ENCODE measurements at regions of chr3 and their contacts with region 1.

Region 1: DNA sequence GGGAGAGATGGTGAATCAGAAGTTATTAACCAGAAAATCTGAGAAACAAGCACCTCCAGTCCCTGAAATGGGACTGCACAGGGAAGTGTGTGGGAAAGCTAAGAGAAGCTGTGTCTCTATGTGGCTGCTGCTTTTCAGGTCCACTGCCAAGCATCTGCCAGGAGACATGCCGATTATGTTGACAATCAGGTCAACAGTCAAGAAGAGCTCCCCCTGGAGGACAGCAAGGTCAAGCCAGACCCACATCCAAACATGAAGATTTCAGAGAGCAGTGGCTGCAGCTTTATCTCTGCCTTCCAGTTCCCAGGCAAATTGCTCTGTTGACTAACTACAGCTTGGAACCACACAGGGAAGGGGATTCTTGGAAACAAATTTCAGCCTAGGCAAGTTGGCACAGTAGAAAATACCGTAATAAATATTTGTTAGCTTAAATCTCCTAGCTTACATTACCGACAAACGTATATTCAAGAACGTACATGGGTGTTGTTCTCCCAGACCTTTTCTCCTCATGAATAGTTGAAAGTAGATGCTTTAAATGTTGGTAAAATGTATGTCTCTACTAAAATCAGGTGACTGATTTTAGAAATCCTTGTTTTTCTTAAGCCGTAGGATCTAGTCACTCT is 394.5 kb upstream of the RARB start:
- DNase-seq: peak in 1 of 2 donors; percentile 15
- ATAC-seq: peak; percentile 55 to 77 (median 72)
- H3K4me3 ChIP-seq: no peak overlapping the region
- H3K27ac ChIP-seq: no peak overlapping the region
- H3K4me1 ChIP-seq: no peaks in the 10 kb centered on the region
- H3K27me3 ChIP-seq: no peaks in the 10 kb centered on the region
- CTCF ChIP-seq: peak; percentile 59

Region 2: GRCh38 chr3:24773798-24774197 is 259.7 kb before region 1 on chr3:
- intact Hi-C with region 1: loop called (anchors 5 to 10 kb)
- DNase-seq: peak; percentile 22 to 63
- ATAC-seq: peak; percentile 48 to 80 (median 66)
- H3K4me3 ChIP-seq: no peak overlapping the region
- H3K27ac ChIP-seq: no peak overlapping the region
- H3K4me1 ChIP-seq: no peaks in the 10 kb centered on the region
- H3K27me3 ChIP-seq: no peaks in the 10 kb centered on the region
- CTCF ChIP-seq: peak; percentile 75

Region 3: DNA sequence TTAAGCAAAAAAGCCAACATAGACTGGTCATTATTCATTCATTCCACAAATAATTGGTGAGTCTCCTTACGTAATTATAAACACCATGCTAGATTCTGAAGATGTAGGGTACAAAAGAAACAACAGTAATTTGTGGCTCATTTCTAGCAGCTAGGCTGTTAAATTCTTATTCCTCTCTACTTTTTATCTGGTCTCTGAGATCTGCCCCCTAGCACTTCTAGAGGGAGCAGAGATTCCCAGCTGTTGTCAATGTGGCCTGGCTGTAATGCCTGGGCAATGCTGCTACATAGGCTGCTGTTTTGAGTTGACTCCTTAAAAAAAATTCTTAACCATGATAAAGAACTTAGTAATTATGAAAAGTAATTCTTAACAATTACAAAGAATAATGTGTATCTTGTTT is 104.0 kb before region 1 on chr3:
- intact Hi-C with region 1: no loop called
- DNase-seq: no peak
- ATAC-seq: no peak
- H3K4me3 ChIP-seq: no peak overlapping the region
- H3K27ac ChIP-seq: no peak overlapping the region
- H3K4me1 ChIP-seq: no peaks in the 10 kb centered on the region
- H3K27me3 ChIP-seq: no peaks in the 10 kb centered on the region
- CTCF ChIP-seq: no peak

Region 4: DNA sequence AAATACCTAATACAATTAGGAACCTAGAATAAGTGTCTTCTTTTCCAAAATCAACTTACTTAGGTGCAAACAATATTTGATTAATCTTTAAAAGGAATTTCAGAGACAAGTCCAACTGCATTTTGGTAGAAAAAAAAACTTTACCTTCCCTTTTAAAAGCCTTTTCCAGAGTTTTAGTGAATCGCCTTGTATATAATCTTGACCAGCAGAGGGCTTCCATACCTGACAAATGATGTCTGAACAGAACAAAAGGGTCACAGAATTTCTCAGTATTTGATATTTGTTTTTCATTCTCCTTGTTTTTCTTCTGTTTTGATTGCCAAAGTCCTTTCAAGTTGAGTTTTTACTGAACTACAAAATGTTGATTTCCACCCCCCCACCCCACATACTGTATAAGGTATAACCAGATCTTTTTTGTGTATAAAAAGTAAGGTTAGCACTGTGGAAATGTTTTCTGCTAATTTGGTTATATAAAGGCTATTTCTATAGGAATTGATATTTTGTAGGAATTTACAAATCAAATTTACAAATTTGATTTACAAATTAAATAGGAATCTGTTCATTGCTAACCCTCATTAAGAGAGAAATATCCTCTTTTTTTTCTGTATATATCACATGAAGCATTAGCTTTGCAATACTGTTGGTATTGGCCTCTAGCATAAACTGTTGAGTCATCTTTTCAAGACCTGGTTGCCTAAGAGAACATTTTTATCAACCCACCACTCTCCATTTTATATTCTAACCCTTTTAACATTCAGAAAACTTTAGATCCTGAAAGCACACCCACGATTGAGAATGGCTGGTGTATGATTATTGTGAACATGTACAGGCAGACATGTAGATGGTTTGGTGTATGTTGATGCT is 69.5 kb before region 1 on chr3:
- intact Hi-C with region 1: loop called in 1 of 2 experiments (anchors 5 kb)
- DNase-seq: no peak
- ATAC-seq: no peak
- H3K4me3 ChIP-seq: no peak overlapping the region
- H3K27ac ChIP-seq: no peak overlapping the region
- H3K4me1 ChIP-seq: no peaks in the 10 kb centered on the region
- H3K27me3 ChIP-seq: no peaks in the 10 kb centered on the region
- CTCF ChIP-seq: peak; percentile 51

Region 5: GRCh38 chr3:25582242-25582641 is 548.7 kb after region 1 on chr3:
- intact Hi-C with region 1: loop called in 1 of 2 experiments (anchors 10 kb)
- DNase-seq: no peak
- ATAC-seq: peak; percentile 84 to 95 (median 94)
- H3K4me3 ChIP-seq: no peak overlapping the region
- H3K27ac ChIP-seq: peak overlapping the region; percentile 25
- H3K4me1 ChIP-seq: no peaks in the 10 kb centered on the region
- H3K27me3 ChIP-seq: no peaks in the 10 kb centered on the region
- CTCF ChIP-seq: no peak